ENCODE measurements at regions of chr1 and their contacts with region 1.

Region 1: GRCh38 chr1:225777583-225778336 is at the start of gene SRP9:
- DNase-seq: peak; percentile 99
- H3K4me3 Mint-ChIP-seq: no peak within 1 kb of the TSS
- H3K27ac Mint-ChIP-seq: no peak within 1 kb of the TSS
- H3K4me1 Mint-ChIP-seq: peaks cover 25% of the 10 kb centered on the region
- H3K27me3 Mint-ChIP-seq: no peaks in the 10 kb centered on the region
- total RNA-seq, gene SRP9: 294 to 314 TPM

Region 2: GRCh38 chr1:225474986-225475820 is 302.6 kb before region 1 on chr1:
- CTCF ChIA-PET with region 1: interaction called, 32 read pairs
- POLR2A ChIA-PET with region 1: interaction called, 4 read pairs
- intact Hi-C with region 1: loop called (anchors 2 kb)
- DNase-seq: peak; percentile 77
- H3K4me3 Mint-ChIP-seq: no peak overlapping the region
- H3K27ac Mint-ChIP-seq: no peak overlapping the region
- H3K4me1 Mint-ChIP-seq: peaks cover 41% of the 10 kb centered on the region
- H3K27me3 Mint-ChIP-seq: no peaks in the 10 kb centered on the region

Region 3: DNA sequence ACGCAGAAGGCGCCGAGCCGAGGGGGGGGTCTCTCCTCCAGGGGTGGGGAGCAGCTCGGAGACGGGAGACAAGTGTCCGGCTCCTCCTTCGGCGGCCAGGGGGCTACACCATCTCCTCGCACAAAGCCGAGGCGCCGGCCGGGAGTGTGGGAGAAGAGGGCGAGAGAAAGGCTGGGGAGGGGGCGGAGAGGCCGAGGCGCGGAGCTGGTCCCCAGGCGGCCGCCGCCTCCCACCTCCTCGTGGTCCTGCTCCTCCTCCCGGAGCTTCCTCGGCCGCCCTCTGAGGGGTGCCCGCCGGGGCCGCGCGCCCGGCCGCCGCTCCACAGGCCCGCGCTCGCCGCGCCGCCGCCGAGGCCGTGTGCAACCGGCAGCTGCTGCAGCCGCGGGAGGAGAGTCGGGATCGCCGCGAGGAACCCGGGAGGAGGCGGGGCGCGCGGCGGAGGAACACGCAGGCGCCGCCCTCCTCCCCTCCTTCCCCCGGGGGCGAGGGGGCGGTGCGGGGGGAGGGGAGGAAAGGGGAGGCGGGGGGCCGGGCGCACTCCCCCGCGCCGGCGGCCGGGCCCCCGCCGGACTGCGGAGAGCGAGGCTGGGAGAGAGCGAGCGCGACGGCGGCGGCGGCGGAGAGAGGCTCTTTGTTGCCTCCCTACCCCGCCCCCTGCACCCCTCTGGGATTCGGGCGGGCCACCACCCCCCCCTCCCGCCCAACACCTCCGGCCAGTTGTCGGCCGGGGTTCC is 124.9 kb before region 1 on chr1 and contains the start of gene ENAH:
- CTCF ChIA-PET with region 1: interaction called, 3 read pairs
- POLR2A ChIA-PET with region 1: no interaction called
- intact Hi-C with region 1: loop called (anchors 5 kb)
- DNase-seq: peak; percentile 56
- H3K4me3 Mint-ChIP-seq: peak within 1 kb of the TSS; percentile 82
- H3K27ac Mint-ChIP-seq: no peak within 1 kb of the TSS
- H3K4me1 Mint-ChIP-seq: peaks cover 13% of the 10 kb centered on the region
- H3K27me3 Mint-ChIP-seq: peaks cover 24% of the 10 kb centered on the region
- total RNA-seq, gene ENAH: 0.80 to 0.95 TPM

Region 4: DNA sequence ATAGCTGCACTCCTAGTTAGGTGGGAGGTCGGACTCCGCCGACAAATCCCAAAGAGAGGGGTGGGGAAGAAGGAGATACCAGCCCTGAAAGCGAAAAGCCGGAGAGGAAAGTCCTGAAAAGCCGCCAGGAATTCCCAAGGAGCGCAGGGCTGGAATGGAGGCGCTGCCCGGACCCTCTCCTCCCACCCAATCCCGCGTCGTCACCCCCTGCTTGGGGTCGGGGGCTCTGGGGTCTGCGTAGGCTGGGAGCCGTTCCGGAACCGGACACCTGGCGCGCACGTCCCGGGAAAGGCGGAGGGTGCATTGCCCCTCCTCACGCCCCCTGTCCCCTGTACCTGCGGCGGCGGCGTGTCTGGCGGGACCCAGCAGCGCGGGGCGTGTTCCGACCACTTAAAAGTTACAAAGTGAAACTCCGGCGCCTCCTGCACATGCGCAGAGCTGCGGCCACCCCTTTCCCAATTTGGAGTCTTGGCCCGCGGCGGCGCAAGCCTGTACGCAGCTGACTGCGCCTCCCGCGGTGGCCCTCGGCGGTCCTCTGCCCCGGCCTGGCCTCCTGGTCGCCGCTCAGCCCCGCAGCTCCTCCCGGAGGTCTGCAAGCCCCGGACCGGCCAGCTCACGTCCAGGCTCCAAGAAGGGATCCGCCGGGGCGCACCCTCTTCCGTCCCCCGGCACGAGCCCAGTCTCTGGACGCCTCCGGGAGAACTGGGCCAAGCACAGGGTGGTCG is 104.4 kb after region 1 on chr1 and contains the start of gene TMEM63A:
- CTCF ChIA-PET with region 1: interaction called, 22 read pairs
- POLR2A ChIA-PET with region 1: interaction called, 49 read pairs
- intact Hi-C with region 1: loop called (anchors 2 kb)
- DNase-seq: peak; percentile 92
- H3K4me3 Mint-ChIP-seq: peak within 1 kb of the TSS; percentile 88
- H3K27ac Mint-ChIP-seq: peak within 1 kb of the TSS; percentile 92
- H3K4me1 Mint-ChIP-seq: peaks cover 49% of the 10 kb centered on the region
- H3K27me3 Mint-ChIP-seq: no peaks in the 10 kb centered on the region
- total RNA-seq, gene TMEM63A: 52.2 to 59.1 TPM

Region 5: GRCh38 chr1:225923692-225924555 is 146.2 kb after region 1 on chr1 and contains the start of gene PYCR2:
- CTCF ChIA-PET with region 1: interaction called, 17 read pairs
- POLR2A ChIA-PET with region 1: interaction called, 20 read pairs
- intact Hi-C with region 1: loop called (anchors 2 kb)
- DNase-seq: peak; percentile 97
- H3K4me3 Mint-ChIP-seq: peak within 1 kb of the TSS; percentile 95
- H3K27ac Mint-ChIP-seq: peak within 1 kb of the TSS; percentile 92
- H3K4me1 Mint-ChIP-seq: peaks cover 37% of the 10 kb centered on the region
- H3K27me3 Mint-ChIP-seq: no peaks in the 10 kb centered on the region
- total RNA-seq, gene PYCR2: 127 TPM

Measured in activated CD4-positive, alpha-beta memory T cell treated with anti-CD3 and anti-CD28 coated beads for 36 hours (primary cell).